Motor neuron (in vitro differentiated cells): ENCODE measurements at regions of chr2 and their contacts with region 1.

Region 1: GRCh38 chr2:70789304-70790135 is 923 bp downstream of the FIGLA start:
- ATAC-seq: peak; percentile 80 to 93 (median 88)
- H3K4me3 ChIP-seq: peak overlapping the region; percentile 5 to 24 (median 11)
- H3K27ac ChIP-seq: no peak overlapping the region
- H3K4me1 ChIP-seq: no peaks in the 10 kb centered on the region

Region 2: DNA sequence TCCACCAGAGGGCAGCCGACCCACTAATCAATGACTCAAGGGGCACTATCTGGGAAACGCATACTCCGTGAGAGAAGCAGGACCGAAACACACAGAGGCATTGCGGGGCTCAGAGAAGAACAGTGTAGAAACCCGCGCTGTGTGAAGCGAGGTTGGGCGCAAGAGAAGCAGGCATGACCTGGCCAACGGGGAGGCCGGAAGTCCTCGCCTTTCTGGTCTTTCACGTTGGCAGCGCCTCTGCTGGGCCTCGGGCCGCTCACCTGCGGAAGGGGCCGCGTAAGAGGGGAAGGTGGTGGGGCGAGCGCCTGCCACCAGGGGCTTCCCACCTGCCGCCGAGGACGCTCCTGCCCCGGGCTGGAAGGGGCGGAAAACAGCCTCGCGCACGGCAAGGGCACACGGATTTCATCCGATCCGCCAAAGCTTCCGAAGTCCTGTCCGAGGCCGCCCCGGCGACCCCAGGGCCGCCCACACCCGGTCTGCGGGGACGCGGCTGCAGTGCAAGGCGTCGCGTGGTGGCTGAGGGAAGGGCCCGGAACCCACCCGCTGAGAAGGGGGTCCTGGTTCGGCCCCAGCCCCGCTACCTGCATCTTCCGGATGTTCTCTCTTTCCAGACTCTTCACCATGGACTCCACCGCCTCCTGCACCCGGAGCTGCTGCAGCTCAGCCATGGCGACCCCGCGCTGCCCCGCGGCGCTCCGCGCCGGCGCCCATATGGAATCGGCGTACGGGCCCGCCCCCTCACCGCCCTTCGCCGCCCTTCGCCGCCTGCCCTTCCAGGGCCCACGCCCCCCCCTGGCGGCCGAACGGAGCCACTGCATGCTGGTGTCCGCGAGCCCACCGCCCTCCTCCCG is 488.0 kb before region 1 on chr2 and contains the start of gene FAM136A:
- in situ Hi-C with region 1: loop called in 1 of 9 experiments (anchors 25 kb)
- ATAC-seq: peak; percentile 82 to 95 (median 88)
- H3K4me3 ChIP-seq: peak within 1 kb of the TSS; percentile 62 to 86 (median 72)
- H3K27ac ChIP-seq: peak within 1 kb of the TSS; percentile 73 to 82
- H3K4me1 ChIP-seq: peaks cover 12 to 13% of the 10 kb centered on the region in 2 donors
- total RNA-seq, gene FAM136A: 27.7 to 77.7 (median 43.4) TPM

Region 3: DNA sequence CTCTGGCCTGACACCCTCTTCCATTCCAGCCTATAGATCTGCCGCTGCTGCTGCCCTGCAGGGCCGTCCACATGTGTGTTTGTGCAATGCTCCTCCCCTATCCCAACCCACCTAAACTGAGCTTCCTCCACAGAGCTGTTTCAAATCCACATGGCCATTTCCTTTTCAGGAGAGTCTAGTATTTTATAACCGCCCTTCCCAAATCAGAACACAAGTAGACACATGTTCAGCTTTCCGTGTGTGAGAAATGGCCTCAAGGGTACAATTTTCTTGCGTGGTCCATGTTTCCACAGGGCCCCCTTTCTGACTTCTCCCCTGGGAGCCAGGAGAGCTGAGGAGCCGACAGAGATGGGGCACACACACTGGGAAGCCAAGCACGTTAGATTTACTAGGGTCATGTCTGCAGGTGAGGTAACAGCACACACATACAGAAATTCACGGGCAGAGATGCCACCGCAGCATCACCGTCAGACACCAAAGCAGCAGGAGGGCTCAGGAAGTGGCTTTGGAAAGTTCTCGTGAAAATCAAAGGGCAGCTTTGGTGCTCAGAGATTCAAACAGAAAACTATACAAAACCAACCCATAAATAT is 133.0 kb before region 1 on chr2:
- in situ Hi-C with region 1: loop called in 2 of 9 experiments (anchors 10 to 25 kb)
- ATAC-seq: no peak
- H3K4me3 ChIP-seq: no peak overlapping the region
- H3K27ac ChIP-seq: no peak overlapping the region
- H3K4me1 ChIP-seq: peaks cover 0 to 4% of the 10 kb centered on the region in 2 donors

Region 4: GRCh38 chr2:70671092-70671675 is 118.3 kb before region 1 on chr2:
- in situ Hi-C with region 1: loop called in 1 of 9 experiments (anchors 25 kb)
- ATAC-seq: peak in 2 of 8 experiments; percentile 42 to 72
- H3K4me3 ChIP-seq: no peak overlapping the region
- H3K27ac ChIP-seq: no peak overlapping the region
- H3K4me1 ChIP-seq: no peaks in the 10 kb centered on the region

Region 5: DNA sequence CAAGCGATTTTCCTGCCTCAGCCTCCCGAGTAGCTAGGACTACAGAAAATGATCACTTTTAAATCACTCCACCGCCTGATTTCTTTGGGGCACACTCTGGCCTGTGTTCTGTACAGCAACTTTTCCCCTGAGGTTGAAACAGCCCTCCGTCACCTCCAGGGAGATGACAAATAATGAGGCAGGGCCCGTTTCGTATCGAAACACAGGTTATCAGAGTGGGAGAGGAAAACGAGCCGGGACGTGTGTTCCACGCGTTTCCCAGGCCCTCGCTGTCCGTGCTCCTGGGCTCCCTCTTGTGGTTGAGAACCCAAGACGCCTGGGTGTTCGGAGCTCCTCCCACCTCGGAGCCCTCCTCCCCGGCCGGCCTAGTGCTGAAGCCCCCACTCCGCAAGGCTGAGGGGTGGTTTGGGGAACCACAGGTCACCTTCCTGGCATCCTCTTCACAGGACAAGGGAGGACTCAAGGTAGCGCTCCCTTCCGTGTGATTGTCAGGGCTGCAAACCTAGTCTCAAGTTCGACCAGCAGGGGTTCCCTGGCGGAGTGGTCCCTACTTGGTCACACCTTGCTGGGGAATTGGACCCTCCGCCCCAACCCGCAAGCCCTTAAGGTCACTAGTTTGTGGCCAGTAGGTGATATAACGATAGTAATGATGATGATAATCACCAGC is 158.9 kb after region 1 on chr2:
- in situ Hi-C with region 1: loop called in 1 of 9 experiments (anchors 25 kb)
- ATAC-seq: peak; percentile 92 to 99 (median 94)
- H3K4me3 ChIP-seq: peak overlapping the region in 2 of 5 donors; percentile 4 to 10
- H3K27ac ChIP-seq: no peak overlapping the region
- H3K4me1 ChIP-seq: peaks cover 5% of the 10 kb centered on the region in 2 donors